ENCODE measurements at regions of chr12 and their contacts with region 1.

Region 1: DNA sequence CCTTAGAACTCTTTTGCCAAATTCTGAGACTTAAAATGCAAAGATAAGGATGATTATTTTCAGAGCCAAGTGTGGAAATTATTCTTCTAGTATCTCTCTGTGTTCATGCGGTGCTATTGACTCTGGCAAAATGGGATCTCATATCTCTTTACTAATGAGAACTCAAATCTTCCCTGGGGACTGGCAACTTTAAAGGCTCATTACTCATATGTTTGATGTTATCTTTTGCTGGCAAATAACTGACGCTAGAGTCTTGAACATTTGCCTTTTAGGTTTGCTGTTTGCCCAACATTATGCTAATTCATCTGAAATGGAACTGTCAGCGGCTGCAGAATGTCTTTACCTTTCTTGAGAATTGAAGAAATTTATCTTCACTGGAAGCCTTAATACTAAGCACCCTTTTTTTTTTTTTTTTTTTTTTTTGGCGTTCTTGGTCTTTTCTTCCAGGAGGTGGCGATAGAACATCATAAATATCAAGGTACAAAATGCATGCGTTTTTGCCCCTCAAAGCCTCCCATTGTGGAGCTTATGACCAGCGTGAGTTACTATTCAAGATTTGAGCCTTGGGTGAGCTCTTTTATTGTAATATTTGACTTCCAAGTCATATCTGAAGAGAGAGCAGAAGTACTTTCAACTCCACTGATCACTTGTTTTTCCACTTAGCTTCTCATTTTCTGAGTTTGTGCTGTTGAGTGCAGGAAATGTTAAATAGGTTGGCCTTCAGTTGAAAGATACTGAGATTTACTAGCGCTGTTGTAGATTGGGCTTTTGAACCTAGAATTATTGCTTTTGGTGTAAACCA is 86.6 kb downstream of the CAND1 start:
- DNase-seq: no peak
- H3K4me3 ChIP-seq: no peak overlapping the region
- H3K27ac ChIP-seq: no peak overlapping the region
- H3K4me1 ChIP-seq: peaks cover 0 to 26% (median 4%) of the 10 kb centered on the region in 4 donors
- H3K27me3 ChIP-seq: no peaks in the 10 kb centered on the region
- CTCF ChIP-seq: peak; percentile 51 to 59 (median 52)
- EP300 ChIP-seq: no peak
- POLR2A ChIP-seq: no peak

Region 2: DNA sequence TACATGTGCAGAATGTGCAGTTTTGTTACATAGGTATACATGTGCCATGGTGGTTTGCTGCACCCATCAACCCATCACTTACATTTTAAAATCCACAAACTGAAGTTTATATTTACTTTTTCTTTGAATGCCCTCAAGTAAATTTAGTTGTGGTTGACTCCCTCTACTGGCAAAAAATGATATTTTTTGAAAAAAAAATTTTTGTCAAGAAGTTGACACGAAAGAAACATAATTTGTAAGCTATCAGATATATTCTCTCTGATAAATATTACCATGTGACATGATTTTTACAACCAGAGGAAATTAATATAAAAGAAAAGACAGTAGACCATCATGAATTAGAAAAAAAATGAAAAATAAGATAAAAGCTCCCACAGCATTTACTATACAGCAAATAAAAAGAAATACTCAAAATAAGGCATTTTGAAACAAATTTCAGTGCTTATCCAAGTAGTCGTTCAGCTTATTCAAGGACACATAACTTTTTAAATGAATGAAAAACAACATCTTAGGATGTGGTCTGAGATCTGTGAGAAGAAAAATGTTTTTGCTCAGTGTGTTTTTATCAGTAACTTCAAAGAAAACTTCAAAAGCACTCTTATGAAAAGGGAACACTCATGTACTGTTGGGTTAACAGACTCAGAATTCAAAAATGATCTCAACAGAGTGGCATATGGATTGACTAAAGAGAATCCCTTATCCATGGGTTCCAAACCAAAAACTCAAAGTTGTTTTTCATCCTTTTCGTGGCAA is 646.9 kb before region 1 on chr12:
- in situ Hi-C with region 1: no loop called
- intact Hi-C with region 1: no loop called
- DNase-seq: no peak
- H3K4me3 ChIP-seq: no peak overlapping the region
- H3K27ac ChIP-seq: no peak overlapping the region
- H3K4me1 ChIP-seq: no peaks in the 10 kb centered on the region
- H3K27me3 ChIP-seq: no peaks in the 10 kb centered on the region
- CTCF ChIP-seq: peak; percentile 17 to 36 (median 22)
- EP300 ChIP-seq: no peak
- POLR2A ChIP-seq: no peak

Region 3: GRCh38 chr12:67433385-67434175 is 77.8 kb after region 1 on chr12:
- in situ Hi-C with region 1: loop called in 1 of 4 experiments (anchors 10 kb)
- intact Hi-C with region 1: no loop called
- DNase-seq: no peak
- H3K4me3 ChIP-seq: no peak overlapping the region
- H3K27ac ChIP-seq: peak overlapping the region; percentile 43 to 64 (median 59)
- H3K4me1 ChIP-seq: peaks cover 6 to 72% (median 38%) of the 10 kb centered on the region in 4 donors
- H3K27me3 ChIP-seq: no peaks in the 10 kb centered on the region
- CTCF ChIP-seq: no peak
- EP300 ChIP-seq: no peak
- POLR2A ChIP-seq: no peak

Region 4: DNA sequence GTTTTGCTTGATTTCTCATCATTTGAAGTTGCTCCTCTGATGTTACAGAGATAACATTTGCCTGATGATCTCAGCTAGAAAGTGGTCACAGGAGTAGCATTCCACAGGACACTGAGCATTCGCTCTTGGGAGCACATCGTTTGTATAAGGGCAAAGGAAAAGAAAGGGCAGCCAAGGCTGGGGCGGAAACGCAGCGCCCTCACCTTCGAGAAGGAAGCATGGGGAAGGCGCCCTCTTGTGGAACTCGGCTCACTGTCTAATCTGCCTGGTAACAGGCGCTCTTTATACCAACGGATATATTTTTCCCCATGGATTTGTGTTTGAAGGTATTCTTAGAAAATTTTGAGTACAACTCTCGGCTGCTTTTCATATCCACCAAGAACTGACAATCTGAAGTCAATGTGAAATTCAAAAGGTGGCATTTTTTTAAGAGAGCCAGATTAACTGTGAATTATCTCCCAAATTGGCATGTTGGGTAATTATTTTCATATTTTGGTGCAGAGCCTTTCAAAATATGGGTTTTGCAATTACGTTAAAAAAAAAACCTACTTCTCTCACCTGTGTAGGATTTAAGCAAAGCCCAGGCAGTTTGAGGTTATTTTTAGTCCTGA is 86.1 kb after region 1 on chr12:
- in situ Hi-C with region 1: loop called in 2 of 4 experiments (anchors 5 to 10 kb)
- intact Hi-C with region 1: loop called (anchors 10 kb)
- DNase-seq: peak; percentile 93
- H3K4me3 ChIP-seq: no peak overlapping the region
- H3K27ac ChIP-seq: peak overlapping the region; percentile 5 to 33 (median 10)
- H3K4me1 ChIP-seq: peaks cover 8 to 20% (median 9%) of the 10 kb centered on the region in 4 donors
- H3K27me3 ChIP-seq: no peaks in the 10 kb centered on the region
- CTCF ChIP-seq: peak; percentile 84 to 92 (median 85)
- EP300 ChIP-seq: no peak
- POLR2A ChIP-seq: no peak

Region 5: GRCh38 chr12:67457778-67458177 is 102.0 kb after region 1 on chr12:
- in situ Hi-C with region 1: no loop called
- intact Hi-C with region 1: no loop called
- DNase-seq: no peak
- H3K4me3 ChIP-seq: no peak overlapping the region
- H3K27ac ChIP-seq: peak overlapping the region in 1 of 4 donors; percentile 34
- H3K4me1 ChIP-seq: peaks cover 0 to 23% (median 5%) of the 10 kb centered on the region in 4 donors
- H3K27me3 ChIP-seq: no peaks in the 10 kb centered on the region
- CTCF ChIP-seq: peak; percentile 6 to 38 (median 29)
- EP300 ChIP-seq: no peak
- POLR2A ChIP-seq: no peak

Region 6: DNA sequence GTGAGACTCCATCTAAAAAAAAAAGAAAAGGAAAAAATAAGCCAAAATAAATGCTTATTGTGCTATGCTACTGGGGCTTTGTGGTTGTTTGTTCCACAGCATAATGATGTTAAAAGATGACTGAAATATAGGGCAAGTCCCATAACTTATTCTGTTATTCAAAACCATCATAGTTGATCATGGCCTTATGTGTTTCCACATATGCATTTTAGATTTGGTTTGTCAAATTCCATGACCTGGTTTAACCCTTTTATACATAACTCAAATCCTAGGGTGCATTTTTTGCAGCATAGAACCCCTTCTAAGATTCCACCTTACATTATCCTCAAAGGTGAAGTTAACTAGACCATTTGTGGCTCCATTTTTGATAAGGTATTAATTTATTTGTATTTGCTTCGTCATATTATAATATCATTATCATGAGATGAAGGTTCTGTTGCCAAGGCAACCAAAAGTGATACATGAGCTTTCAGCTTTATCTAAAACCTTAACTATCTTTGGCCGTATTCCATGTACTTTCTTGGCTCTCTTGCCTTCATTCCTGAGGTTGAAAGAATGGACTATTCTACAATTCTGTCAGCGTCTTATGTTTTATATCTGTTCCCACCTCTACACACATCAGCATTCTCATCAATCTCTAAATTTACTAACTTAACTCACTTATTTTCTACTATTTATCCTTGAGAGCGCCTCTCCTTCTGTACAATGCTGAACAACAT is 154.0 kb after region 1 on chr12:
- in situ Hi-C with region 1: no loop called
- intact Hi-C with region 1: no loop called
- DNase-seq: no peak
- H3K4me3 ChIP-seq: no peak overlapping the region
- H3K27ac ChIP-seq: no peak overlapping the region
- H3K4me1 ChIP-seq: peaks cover 0 to 3% (median 0%) of the 10 kb centered on the region in 4 donors
- H3K27me3 ChIP-seq: no peaks in the 10 kb centered on the region
- CTCF ChIP-seq: no peak
- EP300 ChIP-seq: no peak
- POLR2A ChIP-seq: no peak

Region 7: DNA sequence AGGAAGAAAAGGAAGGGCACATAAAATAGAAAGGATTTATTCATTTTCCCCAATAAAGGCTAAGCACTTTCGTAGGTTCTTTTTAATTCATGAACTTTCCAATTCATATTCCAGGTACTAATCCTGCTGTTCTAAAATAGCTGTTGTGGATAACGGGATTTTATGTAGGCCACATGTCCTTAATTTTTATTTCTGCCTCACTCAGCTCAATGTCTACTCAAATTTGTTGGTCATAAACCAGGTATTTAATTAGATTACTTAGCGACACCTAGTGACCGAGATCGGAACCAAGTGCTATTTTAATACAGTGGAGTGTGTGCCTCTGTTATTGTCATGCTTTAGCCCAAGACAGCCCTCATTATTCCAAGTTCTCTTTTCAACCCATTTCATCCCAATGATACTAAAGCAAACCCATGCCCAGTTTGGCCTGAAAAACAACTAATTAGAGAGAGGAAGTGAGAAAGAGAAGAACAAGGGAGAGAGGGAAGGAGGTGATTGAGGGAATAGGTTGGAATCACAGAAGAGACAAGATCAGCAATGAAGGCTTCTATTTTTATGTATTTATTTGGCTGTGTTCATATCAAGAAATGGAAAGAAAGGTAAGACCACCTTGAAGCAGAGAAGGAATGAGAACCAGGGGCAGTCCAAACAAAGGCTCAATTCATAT is 587.6 kb after region 1 on chr12:
- in situ Hi-C with region 1: loop called (anchors 5 to 25 kb)
- intact Hi-C with region 1: no loop called
- DNase-seq: peak; percentile 72
- H3K4me3 ChIP-seq: no peak overlapping the region
- H3K27ac ChIP-seq: peak overlapping the region in 2 of 4 donors; percentile 5 to 9
- H3K4me1 ChIP-seq: peaks cover 7 to 25% (median 16%) of the 10 kb centered on the region in 4 donors
- H3K27me3 ChIP-seq: no peaks in the 10 kb centered on the region
- CTCF ChIP-seq: peak; percentile 74 to 85 (median 79)
- EP300 ChIP-seq: no peak
- POLR2A ChIP-seq: no peak